Psoas muscle (tissue), 8 donors: ENCODE measurements at regions of chr20 and their contacts with region 1.

Region 1: DNA sequence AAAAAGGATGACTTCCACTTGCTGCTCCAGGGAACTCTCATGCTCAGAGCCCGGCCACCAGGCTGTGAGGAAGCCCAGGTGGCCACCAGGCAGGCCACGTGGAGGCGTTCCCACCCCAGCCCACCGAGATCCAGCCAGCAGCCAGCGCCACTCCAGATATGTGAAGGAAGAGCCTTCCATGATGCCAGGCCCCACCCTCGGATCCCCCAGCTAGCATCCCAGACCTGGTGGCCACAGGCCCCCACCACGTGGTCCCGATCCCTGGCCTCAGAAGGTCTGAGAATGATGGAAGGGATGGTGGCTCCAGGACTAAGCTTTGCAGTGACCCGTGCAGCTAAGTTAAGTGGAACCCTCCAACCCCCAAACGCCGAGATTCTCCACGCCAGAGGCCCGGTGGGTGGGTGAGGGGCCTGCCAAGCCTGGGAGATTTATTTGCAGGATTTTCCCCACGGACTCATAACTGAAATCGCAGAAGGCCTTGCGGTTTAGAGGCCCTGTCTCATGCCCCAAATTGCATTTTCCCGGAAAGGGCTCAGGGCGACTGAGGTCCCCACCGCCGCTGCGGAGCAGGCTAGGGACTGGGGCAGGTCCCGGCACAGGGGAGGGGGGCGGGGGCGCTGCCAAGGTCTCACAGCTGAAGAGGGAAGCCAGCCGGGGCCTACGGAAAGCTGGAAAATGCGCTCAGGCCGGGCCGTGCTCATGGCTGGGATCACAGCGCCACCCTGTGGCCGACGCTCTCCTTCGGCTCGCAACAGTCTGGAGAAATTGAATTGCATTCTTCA is 31.1 kb upstream of the CST7 start:
- DNase-seq: peak; percentile 66 to 78
- ATAC-seq: peak; percentile 74 to 89 (median 82)
- H3K4me3 ChIP-seq: no peak overlapping the region
- H3K27ac ChIP-seq: no peak overlapping the region
- H3K4me1 ChIP-seq: no peaks in the 10 kb centered on the region
- H3K27me3 ChIP-seq: no peaks in the 10 kb centered on the region
- CTCF ChIP-seq: peak; percentile 65

Region 2: DNA sequence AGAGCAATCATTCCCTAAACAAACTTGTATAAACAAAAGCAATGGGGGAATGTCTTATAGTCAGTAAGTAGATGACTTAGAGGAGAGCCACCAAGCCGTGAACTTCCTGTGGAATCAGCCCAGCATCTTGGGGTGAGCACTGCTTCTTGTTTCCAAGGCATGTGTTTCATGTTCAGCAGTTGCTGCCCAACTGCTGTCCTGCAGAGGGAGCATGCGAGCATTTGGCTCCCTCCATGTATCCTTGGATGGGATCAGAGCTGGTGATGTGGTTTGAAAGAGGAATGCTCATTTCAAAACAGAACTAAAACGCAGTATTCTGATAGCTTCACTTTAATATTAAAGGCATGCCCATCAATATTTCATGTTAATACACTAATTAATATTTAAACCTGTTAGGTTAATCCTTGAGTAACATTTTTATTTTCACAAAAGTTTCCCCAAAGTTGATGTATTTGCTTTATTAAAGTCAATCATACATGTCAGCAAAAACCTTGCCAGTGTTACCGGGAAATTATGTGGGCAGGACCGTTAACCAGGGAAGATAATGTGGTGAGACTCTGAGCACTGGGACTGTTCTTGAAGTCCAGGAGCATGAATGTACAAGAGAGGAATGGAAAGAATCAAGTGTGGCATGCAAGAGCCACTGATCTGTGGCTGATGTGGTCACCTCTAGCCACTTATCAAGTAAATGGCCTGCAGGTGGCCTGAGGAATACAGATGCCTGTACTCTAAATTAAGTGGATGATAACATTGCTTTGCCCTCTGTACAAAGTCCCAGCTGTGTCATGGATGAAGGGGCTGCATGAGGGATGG is 757.2 kb before region 1 on chr20:
- intact Hi-C with region 1: loop called in 1 of 2 experiments (anchors 5 kb)
- DNase-seq: peak; percentile 28 to 64
- ATAC-seq: no peak
- H3K4me3 ChIP-seq: no peak overlapping the region
- H3K27ac ChIP-seq: no peak overlapping the region
- H3K4me1 ChIP-seq: no peaks in the 10 kb centered on the region
- H3K27me3 ChIP-seq: no peaks in the 10 kb centered on the region
- CTCF ChIP-seq: peak; percentile 54